Transverse colon (tissue), 4 donors: ENCODE measurements at regions of chr22 and their contacts with region 1.

Region 1: DNA sequence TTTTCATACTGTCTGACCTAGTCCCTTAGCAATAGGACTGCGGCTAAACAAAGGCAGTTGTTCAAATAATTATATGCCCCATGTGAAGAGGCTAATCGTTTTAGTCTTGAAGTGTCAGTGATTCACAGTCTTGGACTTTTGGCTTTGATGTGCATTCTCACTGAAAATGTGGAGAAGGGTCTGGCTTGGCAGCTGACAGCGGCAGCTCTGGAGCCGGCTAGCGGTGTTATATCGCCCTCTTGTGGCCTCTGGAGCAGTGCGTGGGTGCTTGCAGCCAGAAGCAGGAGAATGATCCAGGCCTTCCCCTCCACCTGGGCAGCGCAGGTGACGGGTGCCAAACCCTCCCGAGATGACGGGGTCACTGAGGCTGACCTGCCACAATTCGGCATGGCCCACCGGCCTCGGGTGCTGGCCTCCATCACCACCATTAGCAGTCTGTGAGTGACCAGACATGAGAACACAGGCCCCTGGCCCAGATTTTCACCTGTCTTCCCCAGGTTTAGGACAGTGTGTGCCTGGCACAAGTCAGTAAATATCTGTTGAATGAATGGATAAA is 90.3 kb upstream of the PITPNB start:
- DNase-seq: peak; percentile 76
- H3K4me3 ChIP-seq: no peak overlapping the region
- H3K27ac ChIP-seq: peak overlapping the region in 3 of 4 donors; percentile 0 to 22 (median 6)
- H3K4me1 ChIP-seq: peaks cover 0 to 5% (median 1%) of the 10 kb centered on the region in 4 donors
- H3K27me3 ChIP-seq: no peaks in the 10 kb centered on the region
- CTCF ChIP-seq: peak; percentile 89 to 97 (median 93)
- EP300 ChIP-seq: no peak
- POLR2A ChIP-seq: no peak

Region 2: GRCh38 chr22:26756675-26757293 is 1252.6 kb before region 1 on chr22:
- in situ Hi-C with region 1: no loop called
- intact Hi-C with region 1: loop called (anchors 10 kb)
- DNase-seq: peak; percentile 59
- H3K4me3 ChIP-seq: peak overlapping the region in 1 of 4 donors; percentile 19
- H3K27ac ChIP-seq: no peak overlapping the region
- H3K4me1 ChIP-seq: peaks cover 0 to 10% (median 0%) of the 10 kb centered on the region in 4 donors
- H3K27me3 ChIP-seq: no peaks in the 10 kb centered on the region
- CTCF ChIP-seq: peak; percentile 73 to 94 (median 90)
- EP300 ChIP-seq: no peak
- POLR2A ChIP-seq: no peak

Region 3: DNA sequence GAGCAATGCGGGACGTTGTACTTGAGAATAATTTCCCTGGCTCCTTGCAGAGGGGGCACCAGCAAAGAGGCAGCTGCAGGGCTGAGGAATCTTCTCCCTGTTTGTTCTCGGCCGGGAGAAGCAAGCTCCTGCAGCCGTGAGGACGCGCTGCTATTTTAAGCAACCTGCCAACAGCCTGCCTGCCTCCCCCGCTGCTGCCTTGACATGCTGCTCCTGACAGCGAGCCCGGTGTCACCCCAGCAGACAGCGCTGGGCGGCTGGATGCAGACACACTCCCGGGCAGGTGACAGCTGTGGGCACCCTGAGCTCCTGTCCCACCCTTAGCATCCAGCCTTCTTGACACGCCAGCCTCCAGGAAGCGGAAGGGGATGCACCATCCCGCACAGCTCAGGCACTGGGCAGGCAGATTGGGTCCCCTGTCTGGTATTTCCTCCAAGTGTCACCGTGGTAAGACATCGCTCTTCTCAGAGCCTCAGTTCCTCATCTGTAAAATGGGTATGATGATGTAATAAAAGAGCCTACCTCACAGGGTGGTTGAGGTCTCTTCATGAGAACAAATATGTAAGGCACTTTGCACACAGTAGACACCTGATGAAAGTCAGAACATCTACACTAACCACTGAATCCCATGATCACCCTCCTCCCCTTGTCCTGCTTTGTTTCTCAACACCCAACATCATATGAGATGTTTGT is 738.4 kb before region 1 on chr22:
- in situ Hi-C with region 1: no loop called
- intact Hi-C with region 1: no loop called
- DNase-seq: no peak
- H3K4me3 ChIP-seq: no peak overlapping the region
- H3K27ac ChIP-seq: no peak overlapping the region
- H3K4me1 ChIP-seq: no peaks in the 10 kb centered on the region
- H3K27me3 ChIP-seq: peaks cover 9% of the 10 kb centered on the region
- CTCF ChIP-seq: no peak
- EP300 ChIP-seq: no peak
- POLR2A ChIP-seq: no peak

Region 4: DNA sequence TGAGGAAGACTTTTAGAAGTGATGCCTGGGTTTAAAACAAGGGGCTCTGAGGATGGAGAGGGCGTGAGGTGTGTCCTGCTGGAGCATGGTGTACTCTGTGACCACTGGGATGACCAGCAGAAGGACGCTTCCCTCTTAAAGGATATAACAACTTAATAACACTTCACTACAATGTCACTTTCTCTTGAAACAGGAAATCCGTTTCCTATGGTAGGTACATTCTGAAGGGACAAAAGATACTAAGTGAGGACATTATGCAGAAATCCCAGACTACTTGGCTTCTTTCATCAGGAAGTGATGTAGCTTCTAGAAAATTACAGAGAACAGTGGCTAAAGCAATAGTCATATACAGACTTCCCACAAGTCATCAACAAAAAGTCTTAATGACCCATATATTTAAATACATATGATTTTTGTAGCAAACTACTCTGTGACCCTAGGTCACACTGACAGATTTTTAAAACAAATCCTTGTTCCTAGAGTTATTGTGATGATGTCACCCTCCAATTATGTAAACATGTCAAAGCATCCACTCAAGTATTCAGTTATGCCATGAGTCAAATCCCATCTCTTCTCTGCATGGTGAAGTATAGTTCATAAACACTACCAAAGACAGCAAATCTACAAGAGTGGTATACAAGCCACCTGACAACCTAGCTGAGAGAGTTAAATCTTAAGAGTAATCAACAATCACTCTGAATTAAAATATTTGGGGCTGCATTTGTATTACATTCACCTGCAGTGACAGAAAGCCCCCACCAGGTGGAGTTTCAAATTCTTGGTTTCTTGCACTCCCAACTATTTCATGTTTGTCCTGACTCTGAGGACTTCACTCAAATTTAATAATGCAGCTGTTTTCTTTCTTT is 123.1 kb before region 1 on chr22:
- in situ Hi-C with region 1: loop called (anchors 5 kb)
- intact Hi-C with region 1: loop called (anchors 2 kb)
- DNase-seq: peak; percentile 39
- H3K4me3 ChIP-seq: no peak overlapping the region
- H3K27ac ChIP-seq: peak overlapping the region; percentile 50 to 85 (median 72)
- H3K4me1 ChIP-seq: peaks cover 6 to 50% (median 12%) of the 10 kb centered on the region in 4 donors
- H3K27me3 ChIP-seq: no peaks in the 10 kb centered on the region
- CTCF ChIP-seq: peak; percentile 84 to 92 (median 86)
- EP300 ChIP-seq: no peak
- POLR2A ChIP-seq: no peak

Region 5: DNA sequence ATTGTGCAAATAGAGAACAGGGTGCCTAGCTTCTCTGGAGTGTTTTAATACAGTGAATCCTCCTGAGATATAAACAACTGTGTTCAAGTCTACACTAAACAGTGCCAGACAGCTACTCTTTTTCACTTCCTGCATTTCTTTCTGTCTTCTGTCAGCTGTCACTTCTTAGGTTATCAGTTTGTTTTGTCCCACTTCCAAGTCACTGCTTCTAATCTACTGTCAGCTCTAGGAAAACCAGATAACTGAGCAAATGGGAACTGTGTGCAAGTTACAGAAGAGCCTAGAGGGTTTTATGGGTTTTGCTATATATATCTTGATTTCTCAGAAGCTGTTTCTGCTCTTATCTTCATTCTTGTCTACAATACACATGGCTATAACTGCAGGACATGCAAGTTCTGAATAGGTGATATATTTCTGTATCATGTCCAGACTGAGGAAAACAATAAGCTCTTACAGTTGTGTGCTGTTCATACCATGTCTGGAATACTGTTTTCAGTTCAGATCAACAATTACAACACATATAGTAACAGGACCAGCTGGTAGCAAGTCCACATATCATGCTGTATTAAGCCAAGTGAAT is 96.1 kb before region 1 on chr22:
- in situ Hi-C with region 1: no loop called
- intact Hi-C with region 1: no loop called
- DNase-seq: no peak
- H3K4me3 ChIP-seq: no peak overlapping the region
- H3K27ac ChIP-seq: peak overlapping the region; percentile 1 to 58 (median 49)
- H3K4me1 ChIP-seq: peaks cover 30 to 64% (median 51%) of the 10 kb centered on the region in 4 donors
- H3K27me3 ChIP-seq: no peaks in the 10 kb centered on the region
- CTCF ChIP-seq: no peak
- EP300 ChIP-seq: no peak
- POLR2A ChIP-seq: no peak

Region 6: DNA sequence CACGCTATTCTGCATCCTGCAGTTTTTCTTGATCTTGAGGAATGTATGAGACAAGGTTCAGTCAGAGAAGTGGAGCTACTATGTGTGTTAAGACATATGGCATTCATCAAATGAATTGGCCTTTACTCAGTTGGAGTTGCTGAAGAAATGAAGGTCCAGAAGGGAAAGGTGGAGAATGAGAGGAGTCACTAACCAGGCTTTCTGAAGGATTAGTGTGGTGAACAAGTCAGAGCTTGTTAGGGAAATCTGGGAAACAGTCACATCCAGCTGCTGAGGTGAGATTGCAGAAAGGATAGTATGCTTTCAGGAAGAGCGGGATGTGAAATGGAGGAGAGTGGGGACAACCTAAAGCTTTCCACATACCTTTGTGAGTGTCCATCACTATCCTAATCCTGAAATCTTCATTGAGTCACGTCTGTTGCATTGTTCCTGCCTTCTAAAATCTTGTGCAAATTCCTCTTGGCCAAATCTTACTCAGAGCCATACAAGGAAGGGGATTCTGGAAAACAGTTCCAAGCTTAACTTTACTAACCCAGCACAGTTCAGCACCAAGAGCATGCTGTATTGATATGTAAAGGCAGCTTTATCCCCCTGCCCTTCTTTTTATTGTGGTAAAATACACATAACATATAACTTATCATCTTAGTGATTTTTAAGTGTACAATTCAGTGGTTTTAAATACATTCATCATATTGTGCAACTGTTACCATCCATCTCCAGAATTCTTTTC is 78.9 kb before region 1 on chr22:
- in situ Hi-C with region 1: no loop called
- intact Hi-C with region 1: no loop called
- DNase-seq: no peak
- H3K4me3 ChIP-seq: no peak overlapping the region
- H3K27ac ChIP-seq: no peak overlapping the region
- H3K4me1 ChIP-seq: no peaks in the 10 kb centered on the region
- H3K27me3 ChIP-seq: no peaks in the 10 kb centered on the region
- CTCF ChIP-seq: no peak
- EP300 ChIP-seq: no peak
- POLR2A ChIP-seq: no peak